Activated T-helper 1 cell treated with anti-CD3 and anti-CD28 coated beads, Interleukin-12 subunit alpha, Interleukin-12 subunit beta, Interleukin-2, Interleukin-4 antibody, amounts not matched to agents 30 ng/mL and 10 ng/mL and 1 ng/mL, durations not matched to agents 14 hours and 24 hours and 36 hours (primary cell): ENCODE measurements at regions of chr17 and their contacts with region 1.

Region 1: GRCh38 chr17:416293-417206 is 63.9 kb upstream of the RPH3AL start:
- DNase-seq: peak; percentile 63
- H3K4me3 Mint-ChIP-seq: peak overlapping the region; percentile 97
- H3K27ac Mint-ChIP-seq: peak overlapping the region; percentile 100
- H3K4me1 Mint-ChIP-seq: peaks cover 81% of the 10 kb centered on the region
- H3K27me3 Mint-ChIP-seq: no peaks in the 10 kb centered on the region

Region 2: DNA sequence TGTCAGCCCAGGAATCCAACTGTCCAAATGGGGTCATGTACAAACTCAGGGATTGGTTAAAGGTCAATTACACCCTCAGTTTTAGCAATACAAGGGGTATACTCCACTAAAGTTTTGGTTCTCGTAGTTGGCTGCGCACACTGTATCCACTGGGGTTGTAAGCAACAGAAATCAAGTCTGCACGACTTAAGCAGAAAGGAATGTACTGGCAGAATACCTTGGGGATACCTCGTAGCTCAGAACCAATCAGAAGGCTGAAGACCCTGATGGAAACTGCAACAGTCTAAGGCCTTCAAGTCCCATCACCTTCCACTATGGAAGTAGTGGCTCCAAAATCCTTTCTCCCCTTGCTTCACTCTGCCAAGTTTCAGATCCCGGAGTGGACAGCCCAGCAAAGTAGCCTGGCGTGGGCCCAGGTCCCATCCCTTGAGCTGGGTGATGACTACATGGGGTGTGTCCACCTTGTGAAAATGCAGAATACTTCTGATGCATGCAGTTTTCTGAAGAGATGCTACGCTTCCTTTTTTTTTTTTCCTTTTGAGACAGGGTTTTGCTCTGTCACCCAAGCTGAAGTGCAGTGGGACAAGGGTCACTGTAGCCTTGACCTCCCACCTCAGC is 42.8 kb before region 1 on chr17:
- intact Hi-C with region 1: no loop called
- DNase-seq: no peak
- H3K4me3 Mint-ChIP-seq: no peak overlapping the region
- H3K27ac Mint-ChIP-seq: no peak overlapping the region
- H3K4me1 Mint-ChIP-seq: no peaks in the 10 kb centered on the region
- H3K27me3 Mint-ChIP-seq: peaks cover 3% of the 10 kb centered on the region

Region 3: GRCh38 chr17:404703-405102 is 11.8 kb before region 1 on chr17:
- intact Hi-C with region 1: no loop called
- DNase-seq: no peak
- H3K4me3 Mint-ChIP-seq: no peak overlapping the region
- H3K27ac Mint-ChIP-seq: no peak overlapping the region
- H3K4me1 Mint-ChIP-seq: peaks cover 18% of the 10 kb centered on the region
- H3K27me3 Mint-ChIP-seq: peaks cover 4% of the 10 kb centered on the region

Region 4: GRCh38 chr17:640436-640835 is 223.9 kb after region 1 on chr17:
- intact Hi-C with region 1: loop called (anchors 2 kb)
- DNase-seq: no peak
- H3K4me3 Mint-ChIP-seq: no peak overlapping the region
- H3K27ac Mint-ChIP-seq: no peak overlapping the region
- H3K4me1 Mint-ChIP-seq: no peaks in the 10 kb centered on the region
- H3K27me3 Mint-ChIP-seq: no peaks in the 10 kb centered on the region

Region 5: DNA sequence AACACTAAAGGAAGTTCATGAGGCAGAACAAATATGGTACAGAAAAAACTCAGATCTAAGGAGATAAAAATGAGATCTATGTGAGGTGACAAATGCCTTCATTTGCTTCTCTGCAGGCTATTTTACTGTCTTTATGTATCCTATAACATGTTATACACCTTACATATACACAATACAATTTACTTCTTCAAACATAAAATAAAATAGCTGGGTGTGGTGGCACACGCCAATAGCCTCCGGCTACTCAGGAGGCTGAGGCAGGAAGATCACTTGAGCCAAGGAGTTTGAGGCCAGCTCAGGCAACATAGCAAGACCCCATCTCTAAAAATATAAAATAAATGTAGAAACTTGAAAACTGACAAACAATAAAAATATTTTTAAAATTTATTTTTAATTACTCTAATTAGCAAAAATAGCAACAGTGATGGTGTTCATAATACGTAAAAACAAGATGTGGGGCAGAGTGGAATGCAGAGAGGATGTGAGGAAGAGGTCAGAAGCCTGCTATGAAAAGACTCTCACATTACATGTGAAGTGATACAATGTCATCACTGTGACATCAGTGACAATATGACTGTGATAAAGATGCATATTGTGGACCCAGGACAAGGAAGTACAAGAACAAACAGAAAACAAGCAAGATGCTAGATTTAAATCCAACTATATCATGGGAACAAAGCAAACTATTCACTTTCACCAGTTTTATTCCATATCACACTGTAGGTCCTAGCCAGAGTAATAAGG is 267.1 kb after region 1 on chr17:
- intact Hi-C with region 1: loop called (anchors 1 kb)
- DNase-seq: no peak
- H3K4me3 Mint-ChIP-seq: no peak overlapping the region
- H3K27ac Mint-ChIP-seq: no peak overlapping the region
- H3K4me1 Mint-ChIP-seq: peaks cover 28% of the 10 kb centered on the region
- H3K27me3 Mint-ChIP-seq: no peaks in the 10 kb centered on the region